Heart right ventricle (tissue), 16 donors: ENCODE measurements at regions of chr16 and their contacts with region 1.

Region 1: GRCh38 chr16:85717393-85718121 is 28.8 kb upstream of the GINS2 start:
- DNase-seq: peak; percentile 57 to 68
- ATAC-seq: peak; percentile 41 to 74 (median 59)
- H3K4me3 ChIP-seq: no peak overlapping the region
- H3K27ac ChIP-seq: no peak overlapping the region
- H3K4me1 ChIP-seq: peaks cover 0 to 35% (median 21%) of the 10 kb centered on the region in 9 donors
- H3K27me3 ChIP-seq: peaks cover 0 to 7% (median 0%) of the 10 kb centered on the region in 7 donors
- CTCF ChIP-seq: peak; percentile 72 to 88 (median 83)

Region 2: DNA sequence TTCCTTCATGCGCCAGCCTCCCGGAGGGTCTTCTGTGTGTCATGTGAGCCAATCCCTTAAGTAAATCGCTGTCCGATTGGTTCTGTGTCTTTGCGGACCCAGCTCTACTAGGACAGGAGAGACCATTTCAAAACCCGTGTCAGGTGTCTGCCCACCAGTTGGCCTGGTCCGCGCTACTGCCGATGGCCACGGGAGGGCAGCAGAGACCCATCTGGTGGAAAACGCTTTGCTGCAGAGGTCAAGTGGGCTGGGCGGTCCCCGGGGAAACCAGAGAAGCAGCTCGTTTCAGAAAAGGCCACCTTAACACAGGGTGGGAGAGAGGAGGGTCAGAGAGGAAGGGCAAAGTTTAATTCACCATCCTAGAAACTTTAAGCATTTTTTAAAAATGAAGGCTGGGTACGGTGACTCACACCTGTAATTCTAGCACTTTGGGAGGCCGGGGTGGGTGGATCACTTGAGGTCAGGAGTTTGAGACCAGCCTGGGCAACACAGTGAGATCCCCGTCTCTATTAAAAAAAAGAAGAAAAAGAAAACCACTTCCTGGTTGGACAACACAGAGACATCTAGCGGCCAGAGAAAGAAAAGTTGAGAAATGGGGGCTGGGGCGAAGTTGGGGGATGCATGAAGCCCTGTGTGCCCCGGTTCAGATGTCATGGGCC is 602.5 kb before region 1 on chr16:
- intact Hi-C with region 1: loop called in 1 of 10 experiments (anchors 10 kb)
- DNase-seq: peak; percentile 89 to 91
- ATAC-seq: peak; percentile 79 to 95 (median 90)
- H3K4me3 ChIP-seq: peak overlapping the region in 4 of 10 donors; percentile 2 to 34 (median 22)
- H3K27ac ChIP-seq: peak overlapping the region in 4 of 10 donors; percentile 26 to 58 (median 43)
- H3K4me1 ChIP-seq: peaks cover 0 to 10% (median 5%) of the 10 kb centered on the region in 9 donors
- H3K27me3 ChIP-seq: peaks cover 0 to 3% (median 0%) of the 10 kb centered on the region in 7 donors
- CTCF ChIP-seq: peak; percentile 90 to 98 (median 95)

Region 3: GRCh38 chr16:85275533-85276249 is 441.9 kb before region 1 on chr16:
- intact Hi-C with region 1: loop called in 6 of 10 experiments (anchors 10 kb)
- DNase-seq: peak; percentile 63 to 78
- ATAC-seq: peak; percentile 48 to 85 (median 71)
- H3K4me3 ChIP-seq: no peak overlapping the region
- H3K27ac ChIP-seq: no peak overlapping the region
- H3K4me1 ChIP-seq: peaks cover 0 to 25% (median 0%) of the 10 kb centered on the region in 9 donors
- H3K27me3 ChIP-seq: no peaks in the 10 kb centered on the region
- CTCF ChIP-seq: peak; percentile 77 to 95 (median 91)

Region 4: GRCh38 chr16:85305996-85306792 is 411.4 kb before region 1 on chr16:
- intact Hi-C with region 1: loop called in 2 of 10 experiments (anchors 2 to 10 kb)
- DNase-seq: peak; percentile 79 to 87
- ATAC-seq: peak; percentile 15 to 85 (median 64)
- H3K4me3 ChIP-seq: no peak overlapping the region
- H3K27ac ChIP-seq: peak overlapping the region in 8 of 10 donors; percentile 16 to 66 (median 42)
- H3K4me1 ChIP-seq: peaks cover 11 to 82% (median 72%) of the 10 kb centered on the region in 9 donors
- H3K27me3 ChIP-seq: peaks cover 0 to 5% (median 0%) of the 10 kb centered on the region in 7 donors
- CTCF ChIP-seq: no peak

Region 5: GRCh38 chr16:85393674-85394483 is 323.7 kb before region 1 on chr16:
- intact Hi-C with region 1: loop called in 2 of 10 experiments (anchors 10 kb)
- DNase-seq: peak; percentile 64 to 79
- ATAC-seq: peak; percentile 15 to 66 (median 42)
- H3K4me3 ChIP-seq: no peak overlapping the region
- H3K27ac ChIP-seq: no peak overlapping the region
- H3K4me1 ChIP-seq: peaks cover 22 to 51% (median 33%) of the 10 kb centered on the region in 9 donors
- H3K27me3 ChIP-seq: no peaks in the 10 kb centered on the region
- CTCF ChIP-seq: peak; percentile 73 to 92 (median 89)

Region 6: DNA sequence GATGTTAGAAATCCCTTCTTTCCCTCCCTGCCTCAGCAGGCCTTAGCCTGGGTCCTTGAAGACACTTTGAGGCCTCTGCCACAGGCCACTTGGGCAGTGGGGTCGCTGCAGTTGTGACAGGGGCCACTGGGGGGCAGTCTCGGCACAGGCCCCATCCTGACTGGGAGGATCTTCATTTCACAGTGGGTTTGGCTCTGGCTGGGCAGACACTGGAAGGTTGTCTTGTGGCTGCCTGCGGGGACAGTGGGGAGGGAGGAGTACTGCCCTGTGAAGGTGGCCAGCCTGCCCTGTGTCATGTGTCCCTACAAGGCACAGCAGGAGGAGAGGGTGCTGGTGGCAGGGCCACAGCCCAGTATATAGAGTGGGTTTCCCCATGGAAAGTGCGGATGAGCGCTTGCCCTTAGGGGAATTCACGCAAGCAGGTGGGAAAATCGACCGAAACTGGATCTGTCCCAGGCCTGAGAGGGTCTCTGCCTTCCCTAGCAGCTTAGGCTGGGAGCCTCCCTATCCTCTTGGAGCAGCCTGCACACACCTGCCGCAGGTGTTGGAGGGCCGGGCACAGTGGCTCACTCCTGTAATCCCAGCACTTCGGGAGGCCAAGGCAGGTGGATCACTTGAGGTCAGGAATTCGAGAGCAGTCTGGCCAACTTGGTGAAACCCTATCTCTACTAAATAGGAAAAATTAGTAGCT is 57.6 kb before region 1 on chr16:
- intact Hi-C with region 1: loop called in 6 of 10 experiments (anchors 1 to 5 kb)
- DNase-seq: peak; percentile 76 to 78
- ATAC-seq: peak; percentile 77 to 94 (median 83)
- H3K4me3 ChIP-seq: no peak overlapping the region
- H3K27ac ChIP-seq: peak overlapping the region in 8 of 10 donors; percentile 15 to 63 (median 44)
- H3K4me1 ChIP-seq: peaks cover 0 to 23% (median 13%) of the 10 kb centered on the region in 9 donors
- H3K27me3 ChIP-seq: no peaks in the 10 kb centered on the region
- CTCF ChIP-seq: peak; percentile 81 to 95 (median 91)

Region 7: DNA sequence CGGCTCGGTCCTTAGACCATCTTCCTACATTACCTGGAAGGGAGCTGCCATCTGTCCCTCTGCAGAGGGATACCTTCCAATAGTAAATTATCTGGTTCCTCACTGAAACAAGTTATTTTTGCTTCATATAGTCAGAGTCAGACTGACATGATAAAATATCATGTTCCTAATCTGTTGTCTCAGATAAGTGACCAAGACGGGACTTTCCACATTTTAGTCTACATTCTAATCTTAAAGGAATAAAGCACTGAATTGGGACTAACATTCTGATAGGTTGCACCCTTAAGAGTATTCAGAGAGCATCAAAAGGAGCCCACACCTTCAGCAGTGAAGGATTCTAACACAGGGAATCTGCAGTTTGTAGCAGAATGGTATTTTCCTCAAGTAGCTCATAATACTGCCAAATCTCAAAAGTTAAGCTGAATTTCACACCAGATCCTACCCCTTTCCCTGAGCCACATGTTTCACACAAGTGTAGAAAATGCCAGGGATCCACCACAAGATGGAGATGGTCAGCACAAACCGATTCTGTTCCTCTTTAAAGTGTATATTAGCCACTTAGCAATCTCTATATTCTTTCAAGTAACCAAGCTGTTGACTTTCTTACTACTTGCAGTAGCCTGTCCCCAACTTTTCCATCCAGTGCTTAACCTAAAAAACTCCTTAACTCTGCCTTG is 42.2 kb before region 1 on chr16:
- intact Hi-C with region 1: loop called in 2 of 10 experiments (anchors 5 kb)
- DNase-seq: no peak
- ATAC-seq: no peak
- H3K4me3 ChIP-seq: no peak overlapping the region
- H3K27ac ChIP-seq: no peak overlapping the region
- H3K4me1 ChIP-seq: peaks cover 2 to 27% (median 14%) of the 10 kb centered on the region in 9 donors
- H3K27me3 ChIP-seq: no peaks in the 10 kb centered on the region
- CTCF ChIP-seq: peak in 7 of 9 donors; percentile 5 to 52 (median 44)

Region 8: DNA sequence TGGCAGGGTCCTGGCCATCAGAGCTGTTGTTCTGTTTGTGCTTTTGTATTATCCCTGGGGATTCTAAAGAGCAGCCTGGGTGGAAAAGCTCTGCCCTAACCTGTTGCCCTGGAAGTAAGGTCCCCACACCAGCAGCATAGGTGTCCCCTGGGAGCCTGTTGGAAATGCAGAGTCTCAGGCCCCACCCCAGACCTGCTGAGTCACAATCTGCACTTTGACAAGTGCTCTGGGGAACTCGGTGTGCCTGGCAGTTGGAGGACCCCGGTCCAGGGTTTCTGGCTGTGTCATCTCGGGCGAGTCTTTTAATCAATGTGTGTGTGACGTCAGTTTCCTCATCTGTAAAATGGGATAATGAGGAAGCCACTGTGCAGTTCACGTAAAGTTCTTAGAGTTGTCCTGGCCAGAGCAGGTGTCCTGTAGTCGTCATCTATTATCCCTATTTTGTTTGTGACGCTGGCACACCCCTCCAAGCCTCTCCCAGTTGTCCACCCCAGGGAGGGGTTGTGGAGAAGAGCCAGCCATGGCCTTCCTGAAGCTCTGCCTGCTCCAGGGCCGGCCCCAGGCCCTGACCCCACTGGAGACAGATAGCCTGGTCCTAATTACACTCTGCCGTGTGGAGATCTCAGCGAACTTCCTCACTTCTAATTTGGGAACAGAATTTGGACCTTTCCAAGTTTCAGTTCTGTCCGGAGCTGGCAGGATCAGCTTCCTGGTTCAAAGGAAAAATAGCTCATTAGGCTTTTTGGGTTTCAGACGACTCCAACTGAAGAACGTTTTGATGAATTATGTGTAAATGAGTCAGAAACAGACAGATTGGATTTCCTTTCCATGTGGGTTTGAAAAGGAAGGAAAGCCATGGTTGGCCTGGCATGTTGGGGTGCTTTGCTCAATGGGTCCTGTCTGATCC is 497.0 kb after region 1 on chr16:
- intact Hi-C with region 1: no loop called
- DNase-seq: peak in 1 of 2 donors; percentile 24
- ATAC-seq: peak; percentile 39 to 91 (median 80)
- H3K4me3 ChIP-seq: no peak overlapping the region
- H3K27ac ChIP-seq: peak overlapping the region in 4 of 10 donors; percentile 16 to 58 (median 31)
- H3K4me1 ChIP-seq: peaks cover 0 to 14% (median 0%) of the 10 kb centered on the region in 9 donors
- H3K27me3 ChIP-seq: peaks cover 0 to 31% (median 10%) of the 10 kb centered on the region in 7 donors
- CTCF ChIP-seq: no peak